ENCODE measurements at regions of chr1 and their contacts with region 1.

Region 1: GRCh38 chr1:244599937-244600350 is 53.0 kb upstream of the DESI2 start:
- DNase-seq: peak; percentile 12
- H3K4me3 ChIP-seq: no peak overlapping the region
- H3K27ac ChIP-seq: no peak overlapping the region
- H3K4me1 ChIP-seq: peaks cover 0 to 3% (median 0%) of the 10 kb centered on the region in 4 donors
- H3K27me3 ChIP-seq: peaks cover 2% of the 10 kb centered on the region
- CTCF ChIP-seq: no peak
- EP300 ChIP-seq: no peak
- POLR2A ChIP-seq: no peak

Region 2: GRCh38 chr1:245045087-245045881 is 445.3 kb after region 1 on chr1:
- in situ Hi-C with region 1: loop called (anchors 10 to 25 kb)
- intact Hi-C with region 1: loop called (anchors 10 kb)
- DNase-seq: peak; percentile 75
- H3K4me3 ChIP-seq: no peak overlapping the region
- H3K27ac ChIP-seq: peak overlapping the region; percentile 29 to 65 (median 37)
- H3K4me1 ChIP-seq: peaks cover 0 to 29% (median 13%) of the 10 kb centered on the region in 4 donors
- H3K27me3 ChIP-seq: no peaks in the 10 kb centered on the region
- CTCF ChIP-seq: no peak
- EP300 ChIP-seq: no peak
- POLR2A ChIP-seq: peak; percentile 32